Sigmoid colon (tissue), 7 donors: ENCODE measurements at regions of chr3 and their contacts with region 1.

Region 1: GRCh38 chr3:146218880-146219866 is 31.7 kb downstream of the PLSCR4 start:
- DNase-seq: no peak
- H3K4me3 ChIP-seq: no peak overlapping the region
- H3K27ac ChIP-seq: no peak overlapping the region
- H3K4me1 ChIP-seq: peaks cover 0 to 21% (median 10%) of the 10 kb centered on the region in 4 donors
- H3K27me3 ChIP-seq: no peaks in the 10 kb centered on the region
- CTCF ChIP-seq: peak; percentile 33 to 70 (median 60)
- EP300 ChIP-seq: no peak
- POLR2A ChIP-seq: no peak

Region 2: GRCh38 chr3:146250449-146251382 is 31.5 kb after region 1 on chr3 and contains the start of gene PLSCR4:
- intact Hi-C with region 1: loop called (anchors 5 kb)
- DNase-seq: peak; percentile 88
- H3K4me3 ChIP-seq: peak within 1 kb of the TSS; percentile 81 to 97 (median 82)
- H3K27ac ChIP-seq: peak within 1 kb of the TSS; percentile 93 to 97 (median 96)
- H3K4me1 ChIP-seq: peaks cover 0 to 57% (median 34%) of the 10 kb centered on the region in 4 donors
- H3K27me3 ChIP-seq: no peaks in the 10 kb centered on the region
- CTCF ChIP-seq: no peak
- EP300 ChIP-seq: no peak
- POLR2A ChIP-seq: peak in 1 of 2 donors; percentile 8
- total RNA-seq, gene PLSCR4: 53.5 to 67.4 (median 56.1) TPM

Region 3: GRCh38 chr3:146326670-146327543 is 107.7 kb after region 1 on chr3:
- intact Hi-C with region 1: loop called (anchors 1 kb)
- DNase-seq: peak; percentile 70
- H3K4me3 ChIP-seq: no peak overlapping the region
- H3K27ac ChIP-seq: no peak overlapping the region
- H3K4me1 ChIP-seq: peaks cover 0 to 4% (median 0%) of the 10 kb centered on the region in 4 donors
- H3K27me3 ChIP-seq: no peaks in the 10 kb centered on the region
- CTCF ChIP-seq: peak; percentile 52 to 63 (median 58)
- EP300 ChIP-seq: no peak
- POLR2A ChIP-seq: no peak

Region 4: DNA sequence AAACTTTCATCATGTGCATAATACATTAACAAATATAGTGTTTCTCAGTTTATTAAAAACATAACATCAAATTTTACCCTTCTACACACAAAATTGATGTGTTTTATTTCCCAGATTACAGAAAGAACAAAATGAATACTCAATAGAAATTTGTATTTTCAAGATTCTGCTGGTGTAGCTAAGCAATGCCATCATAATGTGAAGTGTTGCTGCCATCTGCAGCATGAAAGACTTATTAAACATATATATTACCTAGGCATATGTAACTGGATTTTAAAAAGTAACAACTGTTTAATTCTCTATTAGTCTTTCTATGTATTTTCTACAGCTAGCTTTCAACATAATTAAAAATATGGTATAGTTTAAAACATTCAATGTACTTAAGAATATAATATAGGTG is 358.5 kb after region 1 on chr3:
- intact Hi-C with region 1: loop called (anchors 10 kb)
- DNase-seq: no peak
- H3K4me3 ChIP-seq: no peak overlapping the region
- H3K27ac ChIP-seq: no peak overlapping the region
- H3K4me1 ChIP-seq: no peaks in the 10 kb centered on the region
- H3K27me3 ChIP-seq: no peaks in the 10 kb centered on the region
- CTCF ChIP-seq: peak in 1 of 4 experiments; percentile 26
- EP300 ChIP-seq: no peak
- POLR2A ChIP-seq: no peak